ENCODE measurements at regions of chr1 and their contacts with region 1.

Region 1: DNA sequence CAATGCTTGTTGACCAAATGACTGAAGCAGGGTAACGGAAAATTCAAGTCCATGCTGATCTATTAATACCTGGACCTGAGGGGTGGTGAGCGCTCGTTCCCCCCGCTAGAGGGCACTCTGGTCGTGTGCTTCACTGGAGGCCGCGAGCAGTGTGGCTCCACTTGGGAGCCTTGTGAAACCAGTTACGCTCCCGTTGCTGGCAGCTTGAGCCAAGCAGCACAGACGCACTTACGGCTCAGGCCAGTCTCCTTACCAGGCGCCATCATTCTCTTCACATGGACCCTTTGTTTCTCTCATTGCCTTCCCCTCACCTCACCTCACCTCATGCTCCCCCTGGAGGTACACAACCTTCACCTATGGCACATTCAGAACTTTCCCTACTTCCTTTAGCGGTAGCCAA is 49.7 kb upstream of the TSPAN2 start:
- DNase-seq: peak; percentile 79
- ATAC-seq: peak; percentile 93
- H3K4me3 Mint-ChIP-seq: peak overlapping the region; percentile 33
- H3K27ac Mint-ChIP-seq: no peak overlapping the region
- H3K4me1 Mint-ChIP-seq: no peaks in the 10 kb centered on the region
- H3K27me3 Mint-ChIP-seq: peaks cover 4% of the 10 kb centered on the region
- CTCF ChIP-seq: peak; percentile 86

Region 2: DNA sequence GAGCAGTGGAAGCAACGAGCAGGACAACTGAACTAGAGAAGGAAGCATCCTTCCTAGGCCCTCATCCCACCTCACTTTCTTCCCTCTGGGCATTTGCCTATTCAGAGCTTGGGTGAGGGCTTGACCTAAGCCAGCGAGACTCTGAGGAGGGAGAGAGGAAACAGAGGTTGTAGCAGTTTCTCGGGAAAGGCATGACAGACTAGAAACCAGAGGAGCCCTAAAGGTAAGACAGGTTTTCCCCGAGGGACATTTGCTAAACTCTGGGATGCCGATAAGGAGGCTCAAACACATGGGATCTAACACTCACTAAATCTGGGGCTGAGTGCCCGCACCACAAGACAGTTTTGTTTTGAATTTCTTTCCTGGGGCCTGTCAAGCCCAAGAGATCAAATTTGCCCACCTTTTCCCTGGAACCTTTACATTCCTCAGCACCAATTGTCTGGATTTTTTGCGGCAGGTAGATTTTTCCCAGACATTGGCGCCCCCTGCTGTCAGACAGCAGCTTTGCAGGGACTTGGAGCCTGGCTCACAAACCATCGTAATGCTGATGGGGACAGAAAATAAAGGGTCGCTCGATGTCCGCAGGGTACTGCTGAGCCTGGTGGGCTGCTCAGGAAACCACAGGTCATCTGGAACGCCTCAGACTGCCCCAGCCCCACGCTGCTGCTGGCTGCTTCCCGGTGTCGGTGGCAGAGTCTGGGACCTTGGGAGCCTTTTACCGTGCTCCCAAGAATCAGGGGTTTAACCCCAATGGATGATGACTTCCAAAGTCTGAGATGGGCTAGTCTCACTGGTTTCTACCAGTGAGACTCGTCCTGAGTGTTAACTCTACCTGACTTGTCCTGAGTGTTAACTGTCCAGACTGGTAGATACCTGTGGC is 26.2 kb before region 1 on chr1:
- CTCF ChIA-PET with region 1: interaction called, 11 read pairs
- POLR2A ChIA-PET with region 1: interaction called, 3 read pairs
- intact Hi-C with region 1: no loop called
- DNase-seq: peak; percentile 56
- ATAC-seq: peak; percentile 64
- H3K4me3 Mint-ChIP-seq: no peak overlapping the region
- H3K27ac Mint-ChIP-seq: no peak overlapping the region
- H3K4me1 Mint-ChIP-seq: peaks cover 8% of the 10 kb centered on the region
- H3K27me3 Mint-ChIP-seq: no peaks in the 10 kb centered on the region
- CTCF ChIP-seq: peak; percentile 99

Region 3: GRCh38 chr1:115184951-115185331 is 46.0 kb after region 1 on chr1:
- CTCF ChIA-PET with region 1: interaction called, 25 read pairs
- POLR2A ChIA-PET with region 1: no interaction called
- intact Hi-C with region 1: no loop called
- DNase-seq: no peak
- ATAC-seq: no peak
- H3K4me3 Mint-ChIP-seq: no peak overlapping the region
- H3K27ac Mint-ChIP-seq: peak overlapping the region; percentile 60
- H3K4me1 Mint-ChIP-seq: peaks cover 9% of the 10 kb centered on the region
- H3K27me3 Mint-ChIP-seq: no peaks in the 10 kb centered on the region
- CTCF ChIP-seq: no peak

Region 4: DNA sequence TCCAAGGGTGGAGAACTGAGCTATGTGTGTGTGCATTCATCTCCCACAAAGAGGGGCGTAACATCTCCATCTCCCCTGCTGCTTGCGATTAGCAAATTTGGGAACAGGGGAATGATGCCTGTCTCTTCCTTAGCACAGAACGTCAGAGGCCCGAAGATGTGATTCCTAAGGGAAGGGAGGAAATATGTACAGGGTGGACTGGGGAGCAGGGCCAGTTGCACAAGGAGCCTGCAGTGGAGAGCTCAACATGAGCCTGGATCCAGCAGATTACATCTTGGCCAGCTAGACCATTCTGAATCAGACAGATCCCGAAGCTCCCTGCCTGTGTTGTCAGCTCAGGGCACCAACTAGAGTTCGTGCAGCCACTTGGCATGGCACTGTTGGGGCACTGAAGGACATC is 81.0 kb after region 1 on chr1:
- CTCF ChIA-PET with region 1: no interaction called
- POLR2A ChIA-PET with region 1: no interaction called
- intact Hi-C with region 1: no loop called
- DNase-seq: no peak
- ATAC-seq: no peak
- H3K4me3 Mint-ChIP-seq: no peak overlapping the region
- H3K27ac Mint-ChIP-seq: no peak overlapping the region
- H3K4me1 Mint-ChIP-seq: no peaks in the 10 kb centered on the region
- H3K27me3 Mint-ChIP-seq: peaks cover 18% of the 10 kb centered on the region
- CTCF ChIP-seq: no peak

Region 5: DNA sequence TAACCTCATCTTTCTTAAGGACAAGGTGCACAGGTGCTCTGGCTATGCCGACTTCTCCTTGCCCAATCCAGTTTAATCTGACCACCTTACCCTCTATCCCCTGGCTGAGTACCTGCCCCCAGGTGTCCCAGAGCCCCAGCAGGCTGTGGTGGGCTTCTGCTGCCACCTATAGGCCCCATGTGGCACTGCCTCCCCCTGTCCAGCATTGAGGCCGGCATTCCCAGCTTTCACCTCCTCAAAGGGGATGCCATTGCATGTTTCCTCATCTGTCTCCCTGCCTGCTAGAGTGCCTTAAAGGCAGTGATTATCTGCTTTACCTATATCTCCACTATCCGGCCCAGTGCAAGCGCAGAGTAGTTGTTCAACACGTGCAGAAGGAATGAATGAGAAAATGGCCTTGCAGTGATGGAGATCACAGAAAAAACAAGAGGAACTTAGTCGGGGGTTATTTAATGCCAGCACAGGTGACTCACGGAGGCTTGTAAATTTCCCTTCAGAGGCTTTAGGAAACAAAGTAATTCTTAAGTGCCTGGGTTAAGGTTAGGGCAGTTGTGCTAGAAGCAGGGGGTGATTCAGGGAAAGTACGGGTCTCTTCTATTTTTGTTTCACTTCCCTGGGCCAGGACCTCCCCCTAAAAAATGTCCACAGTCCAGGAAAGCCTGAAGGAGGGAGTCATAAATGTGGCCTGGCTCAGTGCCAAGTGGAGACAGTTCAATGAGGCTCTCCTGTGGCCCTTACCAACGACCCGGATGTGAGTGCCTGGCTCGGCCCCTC is 330.9 kb after region 1 on chr1:
- CTCF ChIA-PET with region 1: interaction called, 30 read pairs
- POLR2A ChIA-PET with region 1: no interaction called
- intact Hi-C with region 1: loop called (anchors 5 kb)
- DNase-seq: peak; percentile 33
- ATAC-seq: peak; percentile 61
- H3K4me3 Mint-ChIP-seq: no peak overlapping the region
- H3K27ac Mint-ChIP-seq: no peak overlapping the region
- H3K4me1 Mint-ChIP-seq: no peaks in the 10 kb centered on the region
- H3K27me3 Mint-ChIP-seq: peaks cover 3% of the 10 kb centered on the region
- CTCF ChIP-seq: peak; percentile 80

Region 6: DNA sequence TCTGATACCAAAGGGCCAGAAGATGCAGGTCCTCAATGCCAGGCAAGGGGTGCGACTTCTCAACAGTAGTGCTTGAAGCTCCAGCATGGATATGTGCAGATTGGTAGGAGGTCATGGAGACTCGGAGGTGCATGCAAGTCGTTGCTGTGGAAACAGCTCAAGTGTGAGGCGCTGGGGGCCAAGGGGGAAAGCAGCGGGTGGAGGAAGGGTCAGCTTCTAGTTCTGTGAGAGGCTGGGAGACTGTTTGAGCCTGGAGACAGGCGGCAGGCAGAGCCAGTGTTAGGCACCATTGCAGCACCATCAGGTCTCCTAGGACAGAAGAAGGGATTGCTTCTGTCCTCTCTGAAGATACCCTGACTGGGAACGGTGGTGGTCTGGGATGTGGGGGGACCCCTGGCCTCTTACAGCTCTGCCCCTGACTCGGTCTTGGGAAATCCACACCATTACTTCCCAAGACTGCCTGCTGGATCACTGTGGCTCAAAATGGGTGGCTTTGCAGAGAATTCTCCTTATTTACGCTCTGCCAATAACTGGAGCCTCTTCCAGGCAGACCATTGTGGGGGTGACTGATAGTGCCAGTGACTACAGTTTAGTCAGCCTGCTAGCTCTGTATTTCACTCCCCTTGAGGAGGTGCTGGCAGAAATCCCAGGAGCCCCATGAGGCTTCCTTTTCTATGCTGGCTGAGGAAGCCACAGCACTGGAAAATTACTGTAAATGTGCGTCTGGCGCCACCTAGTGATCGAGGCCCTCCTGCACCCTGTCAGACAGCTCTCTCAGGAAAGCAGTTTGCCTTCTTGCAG is 456.5 kb after region 1 on chr1:
- CTCF ChIA-PET with region 1: interaction called, 61 read pairs
- POLR2A ChIA-PET with region 1: no interaction called
- intact Hi-C with region 1: loop called (anchors 5 kb)
- DNase-seq: peak; percentile 82
- ATAC-seq: peak; percentile 55
- H3K4me3 Mint-ChIP-seq: no peak overlapping the region
- H3K27ac Mint-ChIP-seq: no peak overlapping the region
- H3K4me1 Mint-ChIP-seq: no peaks in the 10 kb centered on the region
- H3K27me3 Mint-ChIP-seq: no peaks in the 10 kb centered on the region
- CTCF ChIP-seq: peak; percentile 84